ENCODE measurements at regions of chr11 and their contacts with region 1.

Region 1: GRCh38 chr11:70270104-70270876 is at the start of gene PPFIA1:
- DNase-seq: peak; percentile 74 to 97
- H3K4me3 ChIP-seq: peak within 1 kb of the TSS; percentile 88 to 98
- H3K27ac ChIP-seq: peak within 1 kb of the TSS; percentile 77 to 79
- H3K4me1 ChIP-seq: peaks cover 5 to 15% of the 10 kb centered on the region in 2 donors
- H3K27me3 ChIP-seq: no peaks in the 10 kb centered on the region
- CTCF ChIP-seq: peak in 1 of 3 experiments; percentile 14
- total RNA-seq, gene PPFIA1: 29.3 TPM

Region 2: DNA sequence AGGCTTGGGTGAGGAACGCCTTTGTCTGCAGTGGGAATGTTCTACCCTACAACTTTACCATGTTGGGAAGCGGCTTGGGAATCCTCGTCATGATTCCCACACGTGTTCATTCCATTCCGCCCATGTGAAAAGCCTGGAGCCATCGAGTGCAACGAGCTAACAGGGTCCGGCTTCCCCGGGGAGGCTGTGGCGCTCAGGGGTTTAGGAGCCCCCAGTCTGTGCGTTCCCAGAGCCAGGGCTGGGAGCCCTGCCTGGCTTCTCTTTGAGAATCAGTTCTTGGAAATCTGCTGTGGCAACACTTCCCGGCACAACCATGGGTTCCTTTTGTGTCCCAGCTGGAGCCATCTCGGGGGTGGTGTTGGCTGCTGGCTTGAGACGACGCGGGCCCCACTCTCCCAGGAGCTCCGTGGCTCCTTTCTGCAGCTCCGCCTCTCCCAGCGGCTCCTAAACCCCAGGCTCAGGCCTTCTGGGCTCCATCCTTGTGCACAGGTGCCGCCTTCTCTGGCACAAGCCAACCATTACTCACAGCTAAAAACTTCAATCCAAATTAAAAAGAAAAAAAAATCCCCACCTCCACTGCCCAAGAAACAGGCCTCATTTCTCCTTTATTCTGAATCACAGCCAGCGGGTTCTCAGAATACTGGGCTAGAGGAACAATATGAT is 18.5 kb before region 1 on chr11:
- intact Hi-C with region 1: loop called (anchors 1 kb)
- DNase-seq: peak in 1 of 2 donors; percentile 73
- H3K4me3 ChIP-seq: peak overlapping the region in 1 of 2 donors; percentile 19
- H3K27ac ChIP-seq: peak overlapping the region; percentile 83 to 86
- H3K4me1 ChIP-seq: peaks cover 0 to 11% of the 10 kb centered on the region in 2 donors
- H3K27me3 ChIP-seq: no peaks in the 10 kb centered on the region
- CTCF ChIP-seq: no peak